GM12878 (cell line): ENCODE measurements at regions of chr3 and their contacts with region 1.

Region 1: DNA sequence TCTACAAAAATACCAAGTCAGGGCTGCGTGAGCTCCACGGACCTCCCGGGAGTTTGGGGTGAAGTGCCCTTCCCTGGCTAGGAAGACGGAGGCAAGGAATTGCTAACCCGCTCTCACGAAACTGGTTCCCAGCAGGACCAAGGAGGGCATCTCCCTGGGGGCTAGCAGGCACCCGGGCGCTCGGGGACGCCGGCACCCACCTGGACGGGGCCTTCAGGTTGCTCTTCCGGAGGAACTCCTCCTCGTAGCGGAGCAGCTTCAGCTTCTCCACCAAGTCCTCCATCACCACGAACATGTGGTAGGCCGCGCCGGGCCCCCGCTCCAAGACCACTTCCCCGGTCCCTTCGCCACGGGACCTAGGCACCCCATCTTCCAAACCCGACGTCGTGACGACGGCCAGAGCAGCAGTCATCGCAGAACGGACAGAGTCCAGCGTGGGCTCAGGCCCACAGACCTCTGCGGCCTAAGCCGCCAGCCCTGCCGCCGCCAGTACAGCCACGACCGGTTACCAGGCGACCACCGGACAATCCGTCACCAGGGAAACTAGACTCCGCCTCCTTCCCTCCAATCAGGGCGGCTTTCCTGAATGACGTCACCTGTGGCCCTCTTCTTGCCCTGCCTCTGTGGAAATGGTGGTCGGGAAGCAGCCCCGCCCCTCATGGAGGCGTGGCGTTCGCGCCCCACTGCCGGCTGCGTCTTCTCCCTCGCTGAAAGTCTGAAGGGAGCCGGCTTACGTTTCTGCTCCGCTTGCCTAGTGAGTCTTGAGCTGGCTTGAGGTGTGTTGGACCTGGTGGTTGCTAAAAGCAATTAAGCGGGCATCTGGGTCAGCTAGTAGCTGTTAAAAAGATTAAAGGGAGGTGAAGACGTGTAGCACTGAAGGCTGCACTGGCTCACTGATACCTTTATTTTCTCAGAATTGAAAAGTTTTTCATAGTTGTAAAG is at the start of gene IFT57:
- DNase-seq: peak; percentile 92
- ATAC-seq: peak; percentile 94
- H3K4me3 ChIP-seq: peak within 1 kb of the TSS; percentile 67
- H3K27ac ChIP-seq: peak within 1 kb of the TSS; percentile 65
- H3K4me1 ChIP-seq: peaks cover 9% of the 10 kb centered on the region; the same call in 1 of the 2 replicates
- H3K27me3 ChIP-seq: no peaks in the 10 kb centered on the region
- CTCF ChIP-seq: no peak
- EP300 ChIP-seq: 0 out of 4 replicates have a peak, but pooled peaks of 1 of the 2 experiments have one; percentile 10
- POLR2A ChIP-seq: peak; percentile 75
- RAD21 ChIP-seq: peak; percentile 11; the same call in 1 of the 2 replicates
- polyA plus RNA-seq, gene IFT57: 1.8 to 2.8 TPM

Region 2: DNA sequence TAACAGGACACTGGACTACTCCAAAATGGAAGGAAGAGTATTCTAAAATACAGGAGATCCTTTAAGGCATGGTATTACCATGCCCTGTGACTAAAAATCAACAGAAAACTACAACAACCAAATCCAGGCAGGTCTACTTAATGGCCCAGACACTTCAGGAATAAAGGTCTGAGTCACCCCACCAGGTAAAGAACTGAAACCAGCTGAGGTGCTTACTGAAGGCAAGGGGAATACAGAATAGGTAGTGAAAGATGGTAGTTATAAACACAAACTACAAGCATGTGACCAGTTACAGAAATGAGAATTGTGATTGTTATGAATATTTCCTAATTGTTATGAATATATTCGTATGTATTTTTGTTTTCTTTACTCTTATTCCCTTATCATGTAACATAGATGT is 13.4 kb before region 1 on chr3:
- CTCF ChIA-PET with region 1: interaction called, 3 read pairs
- POLR2A ChIA-PET with region 1: no interaction called
- RAD21 ChIA-PET with region 1: no interaction called
- SMC1A ChIA-PET with region 1: interaction called, 10 read pairs
- in situ Hi-C with region 1: no loop called
- intact Hi-C with region 1: no loop called
- DNase-seq: peak; percentile 30
- ATAC-seq: peak; percentile 96
- H3K4me3 ChIP-seq: no peak overlapping the region
- H3K27ac ChIP-seq: no peak overlapping the region
- H3K4me1 ChIP-seq: peaks cover 7% of the 10 kb centered on the region; the same call in 1 of the 2 replicates
- H3K27me3 ChIP-seq: no peaks in the 10 kb centered on the region
- CTCF ChIP-seq: no peak
- EP300 ChIP-seq: peak in 1 of 2 experiments; percentile 62; a peak in 2 of 4 replicates
- POLR2A ChIP-seq: no peak
- RAD21 ChIP-seq: no peak

Region 3: DNA sequence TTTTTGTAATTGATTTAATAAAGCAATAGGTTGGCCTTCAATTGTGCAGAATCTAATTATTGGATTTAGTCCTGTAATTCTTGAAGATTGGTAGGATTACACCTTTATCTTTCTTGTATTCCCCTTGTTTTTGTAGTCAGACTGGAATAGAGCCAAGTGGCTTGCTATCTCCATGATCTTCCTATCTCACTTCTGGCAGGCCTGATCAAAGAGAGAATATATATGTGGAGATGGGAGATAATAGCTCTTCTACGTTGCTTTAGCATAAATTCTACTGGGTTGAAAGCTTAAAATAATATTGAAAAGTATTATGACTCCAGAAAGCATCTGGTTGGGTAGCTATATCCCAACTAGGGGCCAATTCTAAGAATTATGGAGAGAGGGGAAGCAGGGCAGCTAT is 16.9 kb after region 1 on chr3:
- CTCF ChIA-PET with region 1: interaction called, 3 read pairs
- POLR2A ChIA-PET with region 1: interaction called, 4 read pairs
- RAD21 ChIA-PET with region 1: no interaction called
- SMC1A ChIA-PET with region 1: interaction called, 10 read pairs
- in situ Hi-C with region 1: no loop called
- intact Hi-C with region 1: no loop called
- DNase-seq: no peak
- ATAC-seq: no peak
- H3K4me3 ChIP-seq: no peak overlapping the region
- H3K27ac ChIP-seq: no peak overlapping the region
- H3K4me1 ChIP-seq: no peaks in the 10 kb centered on the region
- H3K27me3 ChIP-seq: no peaks in the 10 kb centered on the region
- CTCF ChIP-seq: no peak
- EP300 ChIP-seq: no peak
- POLR2A ChIP-seq: no peak
- RAD21 ChIP-seq: no peak

Region 4: GRCh38 chr3:108292905-108293328 is 70.7 kb after region 1 on chr3:
- CTCF ChIA-PET with region 1: interaction called, 4 read pairs
- POLR2A ChIA-PET with region 1: no interaction called
- RAD21 ChIA-PET with region 1: interaction called, 4 read pairs
- SMC1A ChIA-PET with region 1: interaction called, 4 read pairs
- in situ Hi-C with region 1: no loop called
- intact Hi-C with region 1: loop called (anchors 5 kb)
- DNase-seq: peak; percentile 69
- ATAC-seq: peak; percentile 90
- H3K4me3 ChIP-seq: peak overlapping the region; percentile 2; the same call in 1 of the 2 replicates
- H3K27ac ChIP-seq: peak overlapping the region; percentile 48
- H3K4me1 ChIP-seq: peaks cover 30% of the 10 kb centered on the region
- H3K27me3 ChIP-seq: no peaks in the 10 kb centered on the region
- CTCF ChIP-seq: no peak
- EP300 ChIP-seq: peak; percentile 26 to 44; a peak in 1 of 4 replicates
- POLR2A ChIP-seq: no peak
- RAD21 ChIP-seq: no peak

Region 5: GRCh38 chr3:108388136-108389132 is 166.3 kb after region 1 on chr3:
- CTCF ChIA-PET with region 1: no interaction called
- POLR2A ChIA-PET with region 1: no interaction called
- RAD21 ChIA-PET with region 1: no interaction called
- SMC1A ChIA-PET with region 1: no interaction called
- in situ Hi-C with region 1: no loop called
- intact Hi-C with region 1: loop called (anchors 2 kb)
- DNase-seq: peak; percentile 70
- ATAC-seq: peak; percentile 84
- H3K4me3 ChIP-seq: peak overlapping the region; percentile 42
- H3K27ac ChIP-seq: peak overlapping the region; percentile 33; the same call in 1 of the 2 replicates
- H3K4me1 ChIP-seq: peaks cover 33% of the 10 kb centered on the region
- H3K27me3 ChIP-seq: no peaks in the 10 kb centered on the region
- CTCF ChIP-seq: no peak
- EP300 ChIP-seq: peak; percentile 38 to 48; a peak in 1 of 4 replicates
- POLR2A ChIP-seq: no peak
- RAD21 ChIP-seq: no peak

Region 6: DNA sequence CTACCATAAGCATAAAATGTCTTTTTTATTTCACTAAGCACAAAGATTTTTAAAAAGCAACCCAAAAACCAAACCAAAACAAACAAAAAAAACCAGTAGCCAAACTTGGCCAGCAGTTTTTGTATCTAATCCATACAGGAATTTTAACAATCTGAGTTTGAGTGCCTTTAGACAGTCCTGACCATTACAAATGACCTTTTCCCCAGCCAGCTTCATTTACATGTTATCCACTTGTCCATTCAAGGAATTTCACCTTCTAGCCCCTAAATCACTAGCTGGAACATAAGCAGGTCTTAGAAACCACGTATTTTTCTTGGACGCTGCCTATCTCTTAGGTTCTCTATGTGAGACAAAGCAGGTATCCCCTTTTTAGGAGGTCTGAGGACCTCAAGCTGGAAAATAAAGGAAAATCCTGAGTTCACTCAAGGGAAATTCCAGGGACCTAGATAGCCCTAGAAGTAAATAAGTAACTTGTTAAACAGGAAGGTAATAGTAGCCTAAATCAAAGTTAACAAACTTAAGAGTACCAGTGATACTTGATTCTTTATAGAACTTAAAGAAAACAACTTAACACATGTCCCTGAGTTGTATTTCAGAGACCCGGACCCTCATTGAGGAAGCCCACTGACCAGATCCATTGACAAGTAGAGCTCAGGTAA is 332.9 kb after region 1 on chr3:
- CTCF ChIA-PET with region 1: no interaction called
- POLR2A ChIA-PET with region 1: no interaction called
- RAD21 ChIA-PET with region 1: no interaction called
- SMC1A ChIA-PET with region 1: no interaction called
- in situ Hi-C with region 1: no loop called
- intact Hi-C with region 1: no loop called
- DNase-seq: no peak
- ATAC-seq: no peak
- H3K4me3 ChIP-seq: no peak overlapping the region
- H3K27ac ChIP-seq: no peak overlapping the region
- H3K4me1 ChIP-seq: no peaks in the 10 kb centered on the region
- H3K27me3 ChIP-seq: no peaks in the 10 kb centered on the region
- CTCF ChIP-seq: no peak
- EP300 ChIP-seq: no peak
- POLR2A ChIP-seq: no peak
- RAD21 ChIP-seq: no peak